Heart right ventricle (tissue), 16 donors: ENCODE measurements at regions of chr2 and their contacts with region 1.

Region 1: DNA sequence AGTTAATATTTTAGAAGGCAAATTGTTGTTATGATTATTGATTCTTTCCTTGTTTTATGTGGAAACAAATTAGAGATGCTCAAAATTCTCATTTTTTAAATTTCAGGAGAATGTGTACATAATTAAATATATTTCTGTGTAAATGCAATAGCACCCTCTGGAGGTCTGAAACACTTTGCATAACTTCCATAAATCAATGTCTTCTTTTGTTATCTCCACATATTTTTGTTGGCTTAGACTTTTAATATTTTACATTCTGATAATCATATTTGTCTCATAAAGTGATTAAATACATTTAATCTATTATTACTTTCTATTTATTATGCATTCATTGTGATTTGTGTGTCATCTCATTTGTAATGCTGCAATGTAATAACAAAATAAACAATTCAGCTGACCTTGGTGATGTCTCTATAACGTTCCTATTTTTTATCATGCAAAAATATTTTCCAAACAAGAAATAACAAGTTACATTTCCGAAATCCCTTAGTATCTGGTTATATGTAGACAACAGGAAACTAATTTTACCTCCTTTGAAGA is 201.8 kb upstream of the GALNT5 start:
- DNase-seq: no peak
- ATAC-seq: no peak
- H3K4me3 ChIP-seq: peak overlapping the region in 1 of 10 donors; percentile 14
- H3K27ac ChIP-seq: no peak overlapping the region
- H3K4me1 ChIP-seq: peaks cover 0 to 10% (median 0%) of the 10 kb centered on the region in 9 donors
- H3K27me3 ChIP-seq: no peaks in the 10 kb centered on the region
- CTCF ChIP-seq: peak in 7 of 9 donors; percentile 37 to 64 (median 49)

Region 2: GRCh38 chr2:157015015-157015575 is 40.6 kb before region 1 on chr2:
- intact Hi-C with region 1: no loop called
- DNase-seq: no peak
- ATAC-seq: no peak
- H3K4me3 ChIP-seq: no peak overlapping the region
- H3K27ac ChIP-seq: no peak overlapping the region
- H3K4me1 ChIP-seq: no peaks in the 10 kb centered on the region
- H3K27me3 ChIP-seq: no peaks in the 10 kb centered on the region
- CTCF ChIP-seq: no peak

Region 3: GRCh38 chr2:157182834-157183396 is 127.2 kb after region 1 on chr2:
- intact Hi-C with region 1: loop called in 1 of 10 experiments (anchors 10 kb)
- DNase-seq: no peak
- ATAC-seq: peak in 5 of 8 donors; percentile 42 to 81 (median 63)
- H3K4me3 ChIP-seq: no peak overlapping the region
- H3K27ac ChIP-seq: peak overlapping the region in 4 of 10 donors; percentile 15 to 78 (median 38)
- H3K4me1 ChIP-seq: peaks cover 0 to 15% (median 0%) of the 10 kb centered on the region in 9 donors
- H3K27me3 ChIP-seq: no peaks in the 10 kb centered on the region
- CTCF ChIP-seq: no peak